Lower leg skin (tissue), 4 donors: ENCODE measurements at regions of chr2 and their contacts with region 1.

Region 1: GRCh38 chr2:153478334-153479261 is at the start of gene RPRM:
- DNase-seq: peak in 1 of 2 donors; percentile 92
- H3K4me3 ChIP-seq: peak within 1 kb of the TSS; percentile 27
- CTCF ChIP-seq: no peak
- POLR2A ChIP-seq: no peak
- total RNA-seq, gene RPRM: 0.51 to 1.0 (median 0.84) TPM in 3 of 4 donors, not detected in the other

Region 2: DNA sequence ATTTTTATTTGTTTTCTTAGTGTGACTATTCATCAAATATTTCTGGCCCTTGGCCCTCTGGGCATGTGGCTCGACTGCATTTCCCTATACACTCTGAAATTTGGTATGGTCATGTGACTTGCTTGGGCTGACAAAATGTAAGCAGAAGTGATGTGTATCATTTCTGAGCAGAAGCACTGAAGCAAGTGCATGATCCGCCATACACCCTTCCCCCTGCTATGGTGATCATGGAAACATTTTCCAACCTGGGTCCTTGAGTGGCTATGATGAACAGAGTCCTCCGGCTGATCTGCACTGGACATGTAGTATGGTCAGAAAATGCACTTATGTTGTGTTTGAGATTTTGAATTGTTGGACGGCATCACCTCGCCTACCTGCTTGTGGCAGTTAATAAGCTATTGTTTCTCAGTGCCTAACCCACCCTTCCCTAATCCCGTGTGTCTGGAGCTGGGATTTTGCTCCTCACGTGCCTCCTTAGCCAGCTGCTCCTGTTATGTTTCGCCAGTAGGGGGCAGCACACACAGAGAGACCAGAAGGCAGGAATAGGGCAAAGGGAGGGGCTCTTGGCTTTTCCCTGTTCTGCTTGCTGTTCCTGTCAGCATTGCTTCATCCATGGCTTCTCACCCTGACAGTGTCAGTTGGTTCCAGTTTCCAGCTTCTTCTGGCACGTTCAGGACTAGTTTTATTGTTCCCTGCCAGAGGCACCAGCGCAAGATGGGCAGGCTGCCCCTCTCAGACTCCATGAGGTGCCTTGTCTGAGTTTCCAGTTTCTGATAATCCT is 552.9 kb before region 1 on chr2:
- intact Hi-C with region 1: loop called (anchors 10 kb)
- DNase-seq: peak in 1 of 2 donors; percentile 45
- H3K4me3 ChIP-seq: no peak overlapping the region
- CTCF ChIP-seq: peak in 1 of 3 donors; percentile 58
- POLR2A ChIP-seq: no peak

Region 3: DNA sequence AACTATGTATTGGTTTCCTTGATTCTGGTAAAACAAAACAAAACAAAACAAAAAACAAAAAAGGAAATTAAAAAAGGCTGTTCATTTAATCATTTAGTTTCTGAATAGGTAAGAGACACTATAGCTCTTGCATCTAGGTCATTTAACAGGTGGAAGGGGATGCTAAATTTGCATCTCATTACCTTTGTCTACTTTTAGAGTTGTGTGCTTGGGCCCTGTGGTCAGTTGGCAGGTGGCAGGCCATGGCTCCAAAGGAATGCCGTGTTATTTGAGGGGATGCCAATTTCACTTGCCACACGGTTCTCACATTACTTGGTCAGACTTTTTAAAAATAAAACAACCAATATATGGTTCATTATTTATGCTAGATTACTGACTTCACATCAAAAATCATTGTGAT is 402.3 kb after region 1 on chr2:
- intact Hi-C with region 1: no loop called
- DNase-seq: no peak
- H3K4me3 ChIP-seq: no peak overlapping the region
- CTCF ChIP-seq: no peak
- POLR2A ChIP-seq: no peak